ENCODE measurements at regions of chr16 and their contacts with region 1.

Region 1: GRCh38 chr16:87393680-87394055 is 1.5 kb downstream of the MAP1LC3B start:
- DNase-seq: no peak
- ATAC-seq: no peak
- H3K4me3 Mint-ChIP-seq: peak overlapping the region; percentile 92
- H3K27ac Mint-ChIP-seq: peak overlapping the region; percentile 86
- H3K4me1 Mint-ChIP-seq: peaks cover 44% of the 10 kb centered on the region
- H3K27me3 Mint-ChIP-seq: no peaks in the 10 kb centered on the region
- CTCF ChIP-seq: no peak

Region 2: GRCh38 chr16:87316923-87317749 is 76.5 kb before region 1 on chr16 and contains the start of gene C16orf95:
- CTCF ChIA-PET with region 1: interaction called, 10 read pairs
- POLR2A ChIA-PET with region 1: interaction called, 11 read pairs
- intact Hi-C with region 1: loop called (anchors 1 kb)
- DNase-seq: peak; percentile 95
- ATAC-seq: peak; percentile 91
- H3K4me3 Mint-ChIP-seq: peak within 1 kb of the TSS; percentile 94
- H3K27ac Mint-ChIP-seq: peak within 1 kb of the TSS; percentile 96
- H3K4me1 Mint-ChIP-seq: peaks cover 13% of the 10 kb centered on the region
- H3K27me3 Mint-ChIP-seq: no peaks in the 10 kb centered on the region
- CTCF ChIP-seq: no peak
- total RNA-seq, gene C16orf95: 1.7 and 2.1 TPM in 2 replicates

Region 3: GRCh38 chr16:87324411-87325275 is 69.0 kb before region 1 on chr16:
- CTCF ChIA-PET with region 1: interaction called, 10 read pairs
- POLR2A ChIA-PET with region 1: no interaction called
- intact Hi-C with region 1: loop called (anchors 1 kb)
- DNase-seq: peak; percentile 36
- ATAC-seq: peak; percentile 94
- H3K4me3 Mint-ChIP-seq: no peak overlapping the region
- H3K27ac Mint-ChIP-seq: no peak overlapping the region
- H3K4me1 Mint-ChIP-seq: no peaks in the 10 kb centered on the region
- H3K27me3 Mint-ChIP-seq: no peaks in the 10 kb centered on the region
- CTCF ChIP-seq: no peak